Ascending aorta (tissue), 2 donors: ENCODE measurements at regions of chr18 and their contacts with region 1.

Region 1: DNA sequence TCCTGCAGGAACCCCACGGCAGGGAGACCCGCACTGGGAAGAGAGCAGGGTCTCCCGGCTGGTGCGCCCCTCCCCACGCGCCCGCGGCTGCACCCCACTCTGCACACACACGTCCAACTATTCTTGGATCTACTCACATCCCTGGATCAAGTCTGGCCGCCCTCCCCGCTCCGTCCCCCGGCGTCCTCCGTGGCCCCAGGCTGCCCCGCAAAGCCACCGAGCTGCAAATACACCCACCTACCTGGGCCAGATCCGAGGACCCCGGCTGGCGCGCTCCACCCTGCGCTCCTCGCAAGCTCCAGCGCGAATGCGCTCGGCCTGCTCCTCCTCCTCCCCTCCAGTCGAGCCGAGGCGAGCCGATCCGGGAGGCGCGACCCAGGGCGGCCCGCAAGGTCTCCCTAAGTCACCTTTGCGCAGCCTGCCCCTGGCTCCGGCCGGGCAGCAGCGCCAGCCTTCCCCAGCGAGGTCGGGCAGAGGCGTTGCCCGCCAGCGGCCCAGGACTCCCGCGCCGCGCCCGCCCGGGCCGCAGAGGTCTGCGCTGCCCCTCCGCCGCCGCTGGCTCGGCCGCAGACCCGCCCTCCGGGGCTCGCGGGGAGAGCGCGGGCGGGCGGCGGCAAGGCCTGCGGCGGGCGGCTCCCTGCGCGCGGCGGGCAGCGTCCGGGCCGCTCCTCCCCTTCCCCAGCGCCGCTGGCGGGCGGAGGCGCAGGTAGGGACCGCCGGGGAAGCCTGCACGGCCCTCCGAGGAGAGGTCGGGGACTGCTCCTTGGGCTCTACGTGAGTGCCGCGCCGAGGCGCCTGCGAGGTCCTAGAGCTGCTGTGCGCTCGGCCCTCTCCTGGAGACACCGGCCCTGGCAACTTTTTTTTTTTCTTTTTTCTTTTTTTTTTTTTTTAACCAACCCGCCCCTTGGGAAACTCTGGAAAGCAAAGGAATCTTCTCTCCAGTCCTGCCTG is 126.0 kb downstream of the OSBPL1A start:
- DNase-seq: peak in 1 of 2 donors; percentile 78
- H3K4me3 ChIP-seq: peak overlapping the region; percentile 84 to 95
- H3K27ac ChIP-seq: peak overlapping the region; percentile 68 to 89
- H3K4me1 ChIP-seq: peaks cover 0 to 7% of the 10 kb centered on the region in 2 donors
- H3K27me3 ChIP-seq: no peaks in the 10 kb centered on the region
- CTCF ChIP-seq: peak in 2 of 3 experiments; percentile 14 to 23

Region 2: DNA sequence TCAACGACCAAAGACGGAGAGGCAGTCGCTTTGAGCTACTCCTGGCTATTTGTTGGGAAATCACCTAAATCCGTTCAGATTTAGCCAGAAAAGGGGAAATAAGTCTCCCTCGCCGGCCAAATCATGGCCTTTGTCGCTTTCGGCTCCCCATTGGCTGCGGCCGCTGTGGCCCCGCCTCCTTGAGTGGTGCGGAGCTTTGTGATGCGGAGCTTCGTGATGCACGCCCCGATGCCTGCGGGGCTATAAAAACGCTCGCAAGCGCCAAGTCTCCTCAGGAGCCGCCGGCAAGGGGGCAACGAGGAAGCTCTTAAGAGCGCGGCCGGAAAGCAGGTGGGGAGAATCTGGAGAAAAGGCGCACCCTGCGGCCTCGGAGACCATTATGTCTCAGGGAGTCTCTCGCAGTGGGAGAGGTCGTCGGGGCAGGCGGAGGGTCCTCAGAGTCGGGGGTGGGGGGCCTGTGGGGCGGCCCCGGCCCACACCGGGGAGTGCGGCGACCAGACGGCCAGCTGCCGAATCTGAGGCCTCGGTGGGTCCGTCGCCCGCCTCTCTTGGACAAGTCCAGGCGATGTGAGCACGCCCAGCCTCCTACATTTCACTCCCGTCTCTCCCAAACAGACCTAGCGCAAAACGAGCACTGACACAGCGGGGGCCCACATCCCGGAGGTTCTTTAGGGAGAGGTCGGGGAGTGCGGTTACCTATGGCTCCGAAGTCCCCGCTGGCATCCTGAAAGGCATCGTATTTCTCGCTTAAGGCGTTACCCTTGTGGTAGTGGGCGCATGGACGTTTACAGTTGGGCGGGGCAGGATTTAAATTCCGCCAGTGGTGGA is 132.7 kb before region 1 on chr18 and contains the start of gene CABYR:
- intact Hi-C with region 1: loop called (anchors 1 kb)
- DNase-seq: peak; percentile 45 to 89
- H3K4me3 ChIP-seq: peak within 1 kb of the TSS; percentile 76 to 77
- H3K27ac ChIP-seq: peak within 1 kb of the TSS; percentile 55 to 69
- H3K4me1 ChIP-seq: peaks cover 0 to 6% of the 10 kb centered on the region in 2 donors
- H3K27me3 ChIP-seq: no peaks in the 10 kb centered on the region
- CTCF ChIP-seq: no peak
- total RNA-seq, gene CABYR: not detected

Region 3: DNA sequence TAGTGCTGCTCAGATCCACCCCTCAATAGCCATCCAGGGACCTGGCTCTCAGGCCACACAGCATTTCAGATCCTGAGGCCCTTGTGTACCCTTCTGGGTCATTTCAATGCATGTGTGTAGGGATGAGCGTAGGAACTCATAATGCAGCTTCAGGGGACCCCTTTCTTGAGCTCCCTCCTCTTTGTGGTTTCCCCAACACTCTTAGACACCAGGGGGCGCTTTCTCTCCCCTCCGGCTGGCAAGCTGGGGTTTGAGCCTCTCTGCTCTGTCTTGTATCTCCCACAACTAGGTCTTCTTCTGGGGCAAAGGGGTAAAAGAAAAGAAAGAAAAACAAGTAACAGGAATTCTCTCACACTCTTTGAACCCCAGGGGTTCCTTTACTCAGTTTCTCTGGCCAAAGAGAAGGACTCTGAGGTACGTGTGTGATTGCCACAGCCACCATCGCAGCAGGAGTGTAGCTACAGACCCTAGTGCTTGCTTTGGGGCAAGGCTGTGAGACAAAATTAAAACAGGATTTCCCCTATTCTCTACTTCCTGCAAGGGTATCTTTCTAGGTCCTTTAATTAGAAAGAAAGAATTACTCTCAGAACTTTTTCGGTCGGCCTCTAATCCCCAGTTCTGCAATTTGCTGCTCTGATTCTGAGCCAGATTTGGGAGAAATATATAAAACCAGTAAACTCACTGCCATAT is 94.8 kb before region 1 on chr18:
- intact Hi-C with region 1: loop called (anchors 1 kb)
- DNase-seq: peak in 1 of 2 donors; percentile 69
- H3K4me3 ChIP-seq: no peak overlapping the region
- H3K27ac ChIP-seq: no peak overlapping the region
- H3K4me1 ChIP-seq: no peaks in the 10 kb centered on the region
- H3K27me3 ChIP-seq: no peaks in the 10 kb centered on the region
- CTCF ChIP-seq: peak in 2 of 3 experiments; percentile 53 to 78

Region 4: GRCh38 chr18:24219561-24220317 is 51.9 kb before region 1 on chr18:
- intact Hi-C with region 1: loop called (anchors 5 kb)
- DNase-seq: no peak
- H3K4me3 ChIP-seq: no peak overlapping the region
- H3K27ac ChIP-seq: peak overlapping the region; percentile 2 to 21
- H3K4me1 ChIP-seq: peaks cover 0 to 8% of the 10 kb centered on the region in 2 donors
- H3K27me3 ChIP-seq: no peaks in the 10 kb centered on the region
- CTCF ChIP-seq: no peak

Region 5: DNA sequence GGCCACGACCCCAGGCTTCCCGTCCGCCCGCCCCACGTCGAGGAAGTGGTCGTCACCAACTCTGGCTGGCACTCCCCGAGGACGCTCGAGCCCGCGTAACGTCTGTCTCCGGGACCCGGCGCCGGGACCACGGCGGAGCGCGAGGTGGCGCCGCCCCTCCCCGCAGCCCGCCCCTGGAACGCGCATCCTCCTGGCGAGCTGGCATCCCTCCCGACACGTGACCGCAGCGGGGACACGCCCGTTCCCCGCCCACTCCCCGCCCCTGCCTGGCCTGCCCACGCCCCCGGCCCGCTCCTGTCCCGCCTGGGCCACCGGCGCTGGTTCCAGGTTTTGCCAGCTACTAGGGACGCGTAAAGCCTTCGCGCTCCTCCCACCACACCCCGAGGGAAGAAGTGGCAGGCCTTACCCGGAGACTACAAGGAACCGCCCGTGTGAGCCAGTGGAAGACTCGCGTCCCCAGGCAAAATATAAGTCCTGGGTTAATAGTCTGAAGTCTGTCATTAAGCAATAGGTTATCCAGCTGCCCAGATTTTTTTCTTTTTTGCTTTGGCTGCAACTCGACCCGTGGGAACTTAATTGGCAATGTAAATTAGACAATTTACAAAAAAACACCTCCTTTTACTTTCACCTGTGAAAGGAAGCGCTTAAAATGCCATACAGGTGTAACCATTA is 126.2 kb after region 1 on chr18 and contains the start of gene OSBPL1A:
- intact Hi-C with region 1: loop called (anchors 2 kb)
- DNase-seq: peak; percentile 85 to 97
- H3K4me3 ChIP-seq: peak within 1 kb of the TSS; percentile 78 to 84
- H3K27ac ChIP-seq: peak within 1 kb of the TSS; percentile 84 to 90
- H3K4me1 ChIP-seq: no peaks in the 10 kb centered on the region
- H3K27me3 ChIP-seq: no peaks in the 10 kb centered on the region
- CTCF ChIP-seq: no peak
- total RNA-seq, gene OSBPL1A: 42.9 TPM

Region 6: DNA sequence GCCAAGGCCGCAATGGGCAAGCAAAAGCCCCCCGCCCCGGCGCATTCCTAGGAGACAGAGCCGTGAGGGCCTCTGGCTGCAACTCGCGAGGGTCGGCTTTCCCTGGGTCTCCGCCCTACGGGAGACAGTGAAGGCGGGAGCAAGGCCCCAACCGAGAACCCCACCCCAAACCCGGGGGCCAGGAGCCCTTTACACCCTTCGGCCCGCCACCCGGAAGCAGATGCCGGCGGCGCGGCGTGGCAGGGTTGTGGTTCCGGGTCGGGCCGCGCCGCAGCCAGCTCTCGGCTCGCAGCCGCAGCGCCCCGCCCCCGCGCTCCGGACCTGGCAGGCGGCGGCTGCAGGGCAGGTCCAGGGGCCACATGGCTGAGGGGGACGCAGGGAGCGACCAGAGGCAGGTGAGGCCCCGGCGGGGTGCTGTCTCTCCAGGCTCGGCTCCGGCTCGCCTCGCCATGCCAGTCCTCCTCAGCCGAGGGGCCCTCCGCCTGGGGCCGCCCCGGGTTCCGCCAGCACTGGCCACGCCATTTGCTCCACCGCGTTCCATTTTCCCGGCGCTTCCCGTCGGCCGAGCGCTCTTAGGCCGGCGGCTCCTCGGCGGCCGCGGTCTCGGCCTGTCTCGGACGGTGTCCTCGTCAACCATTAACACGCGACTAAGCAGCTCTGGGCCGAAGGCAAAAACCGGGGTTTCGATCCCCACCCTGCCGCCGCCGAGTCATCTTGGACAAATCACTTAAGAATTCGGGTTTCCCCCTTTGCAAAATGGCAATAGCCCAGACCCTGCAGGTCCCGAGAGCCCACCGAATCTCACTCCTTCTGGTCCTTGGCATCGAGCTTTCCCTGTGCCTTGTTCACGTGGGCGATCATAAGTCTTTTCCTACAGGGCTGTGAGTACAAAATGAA is 155.0 kb after region 1 on chr18 and contains the start of gene IMPACT:
- intact Hi-C with region 1: loop called (anchors 5 kb)
- DNase-seq: peak; percentile 19 to 85
- H3K4me3 ChIP-seq: peak within 1 kb of the TSS; percentile 82 to 96
- H3K27ac ChIP-seq: peak within 1 kb of the TSS; percentile 78 to 79
- H3K4me1 ChIP-seq: peaks cover 6 to 7% of the 10 kb centered on the region in 2 donors
- H3K27me3 ChIP-seq: no peaks in the 10 kb centered on the region
- CTCF ChIP-seq: no peak
- total RNA-seq, gene IMPACT: 38.2 TPM